ENCODE measurements at regions of chr2 and their contacts with region 1.

Region 1: DNA sequence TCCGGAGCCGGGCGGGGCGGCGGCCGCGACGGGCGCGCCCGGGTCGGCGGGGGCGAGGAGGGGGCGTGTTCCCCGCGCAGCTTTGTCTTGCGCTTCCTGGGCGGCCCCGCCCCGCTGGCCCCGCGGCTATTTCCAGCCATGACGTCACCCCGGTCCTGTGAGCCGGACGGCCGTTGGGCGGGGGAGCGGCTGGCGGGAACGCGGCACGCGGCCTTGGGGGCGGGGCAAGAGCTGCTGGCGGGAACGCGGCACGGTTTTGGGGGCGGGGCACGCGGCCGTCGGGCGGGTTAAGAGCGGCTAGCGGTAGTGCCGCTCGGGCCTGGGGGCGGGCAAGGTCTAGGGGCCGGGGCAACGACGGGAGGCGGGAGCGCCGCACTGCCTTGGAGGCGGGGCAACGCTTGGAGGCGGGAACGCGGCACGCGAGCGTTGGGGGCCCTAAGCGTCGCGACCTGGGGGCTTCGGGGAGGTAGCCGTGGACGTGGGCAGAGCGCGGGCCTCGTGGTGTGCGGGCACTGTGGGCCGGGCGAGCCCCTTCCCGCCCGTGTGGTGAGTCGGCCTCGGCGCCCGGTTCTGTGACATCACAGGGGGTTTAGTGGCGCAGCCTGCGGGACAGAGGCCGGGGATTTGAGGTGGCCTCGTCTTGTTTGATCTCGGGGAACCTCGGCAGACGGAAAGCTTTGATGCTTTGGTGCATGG is 704 bp downstream of the KLF11 start:
- DNase-seq: peak; percentile 80 to 98 (median 88)

Region 2: GRCh38 chr2:9813312-9814133 is 230.5 kb before region 1 on chr2:
- intact Hi-C with region 1: loop called (anchors 5 kb)
- DNase-seq: peak in 9 of 10 donors; percentile 58 to 96 (median 76)

Region 3: GRCh38 chr2:9897846-9898245 is 146.2 kb before region 1 on chr2:
- intact Hi-C with region 1: no loop called
- DNase-seq: no peak

Region 4: DNA sequence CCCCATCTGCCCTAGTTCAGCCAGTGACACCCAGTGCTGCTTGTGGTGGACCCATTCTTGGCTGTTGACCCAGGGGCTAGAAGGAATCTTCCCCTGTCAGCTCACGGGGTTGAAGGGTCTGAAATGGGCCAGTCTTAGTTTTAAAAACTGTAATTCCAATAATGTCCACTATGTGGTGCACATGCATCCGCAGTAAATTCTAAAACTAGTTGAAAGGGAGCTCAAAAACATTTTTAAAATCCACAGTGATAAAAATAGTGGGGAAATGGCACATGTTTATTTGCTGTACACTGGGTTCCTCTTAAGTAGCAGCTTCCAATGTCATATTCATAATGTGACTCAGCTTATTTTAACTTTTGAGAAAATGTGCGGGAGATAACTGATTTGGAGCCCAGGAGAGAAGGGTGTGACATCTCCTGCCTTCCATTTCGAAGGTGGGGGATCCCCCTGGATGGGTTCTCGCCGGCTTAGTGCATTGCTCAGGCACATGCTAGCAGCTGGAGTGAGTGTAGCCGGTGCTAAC is 59.8 kb before region 1 on chr2:
- intact Hi-C with region 1: loop called (anchors 1 kb)
- DNase-seq: no peak

Measured in posterior cingulate gyrus (tissue), 11 donors.